Prostate gland (tissue), 2 donors: ENCODE measurements at regions of chr6 and their contacts with region 1.

Region 1: GRCh38 chr6:31901953-31902643 is at the start of gene ZBTB12:
- DNase-seq: peak; percentile 92
- H3K4me3 ChIP-seq: peak within 1 kb of the TSS; percentile 59 to 68
- H3K27ac ChIP-seq: peak within 1 kb of the TSS; percentile 82 to 90
- H3K4me1 ChIP-seq: peaks cover 5% of the 10 kb centered on the region
- H3K27me3 ChIP-seq: no peaks in the 10 kb centered on the region
- CTCF ChIP-seq: peak in 2 of 4 experiments; percentile 17 to 21
- POLR2A ChIP-seq: peak; percentile 57
- total RNA-seq, gene ZBTB12: 3.8 to 4.1 TPM

Region 2: GRCh38 chr6:31559958-31560696 is 342.0 kb before region 1 on chr6:
- intact Hi-C with region 1: no loop called
- DNase-seq: no peak
- H3K4me3 ChIP-seq: no peak overlapping the region
- H3K27ac ChIP-seq: no peak overlapping the region
- H3K4me1 ChIP-seq: no peaks in the 10 kb centered on the region
- H3K27me3 ChIP-seq: no peaks in the 10 kb centered on the region
- CTCF ChIP-seq: no peak
- POLR2A ChIP-seq: no peak

Region 3: DNA sequence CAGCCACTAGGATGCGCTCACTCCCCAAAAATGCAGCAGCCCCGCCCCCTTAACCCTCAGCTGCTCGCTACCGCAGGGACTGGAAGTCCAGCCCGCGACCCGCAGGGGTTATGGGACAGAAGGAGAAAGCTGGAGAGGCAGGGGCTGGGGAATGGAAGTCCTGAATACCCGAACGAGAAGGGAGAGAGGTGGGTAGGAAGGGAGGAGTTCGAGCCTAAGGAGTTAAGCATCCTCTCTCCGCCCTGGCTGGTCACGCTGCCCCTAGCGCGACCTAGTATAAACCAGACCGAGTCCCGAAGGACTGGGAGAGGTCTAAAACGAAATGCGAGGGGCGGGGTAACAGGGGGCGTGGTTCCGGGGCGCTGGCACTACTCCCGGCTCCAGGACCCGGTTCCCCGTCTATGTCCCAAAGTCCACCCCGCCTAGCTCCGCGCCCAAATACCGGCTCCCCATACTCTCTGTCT is 172.6 kb before region 1 on chr6:
- intact Hi-C with region 1: loop called (anchors 5 kb)
- DNase-seq: peak; percentile 88
- H3K4me3 ChIP-seq: peak overlapping the region; percentile 83 to 88
- H3K27ac ChIP-seq: peak overlapping the region; percentile 98 to 99
- H3K4me1 ChIP-seq: peaks cover 10% of the 10 kb centered on the region
- H3K27me3 ChIP-seq: no peaks in the 10 kb centered on the region
- CTCF ChIP-seq: peak in 3 of 4 experiments; percentile 68 to 82 (median 77)
- POLR2A ChIP-seq: peak; percentile 70

Region 4: DNA sequence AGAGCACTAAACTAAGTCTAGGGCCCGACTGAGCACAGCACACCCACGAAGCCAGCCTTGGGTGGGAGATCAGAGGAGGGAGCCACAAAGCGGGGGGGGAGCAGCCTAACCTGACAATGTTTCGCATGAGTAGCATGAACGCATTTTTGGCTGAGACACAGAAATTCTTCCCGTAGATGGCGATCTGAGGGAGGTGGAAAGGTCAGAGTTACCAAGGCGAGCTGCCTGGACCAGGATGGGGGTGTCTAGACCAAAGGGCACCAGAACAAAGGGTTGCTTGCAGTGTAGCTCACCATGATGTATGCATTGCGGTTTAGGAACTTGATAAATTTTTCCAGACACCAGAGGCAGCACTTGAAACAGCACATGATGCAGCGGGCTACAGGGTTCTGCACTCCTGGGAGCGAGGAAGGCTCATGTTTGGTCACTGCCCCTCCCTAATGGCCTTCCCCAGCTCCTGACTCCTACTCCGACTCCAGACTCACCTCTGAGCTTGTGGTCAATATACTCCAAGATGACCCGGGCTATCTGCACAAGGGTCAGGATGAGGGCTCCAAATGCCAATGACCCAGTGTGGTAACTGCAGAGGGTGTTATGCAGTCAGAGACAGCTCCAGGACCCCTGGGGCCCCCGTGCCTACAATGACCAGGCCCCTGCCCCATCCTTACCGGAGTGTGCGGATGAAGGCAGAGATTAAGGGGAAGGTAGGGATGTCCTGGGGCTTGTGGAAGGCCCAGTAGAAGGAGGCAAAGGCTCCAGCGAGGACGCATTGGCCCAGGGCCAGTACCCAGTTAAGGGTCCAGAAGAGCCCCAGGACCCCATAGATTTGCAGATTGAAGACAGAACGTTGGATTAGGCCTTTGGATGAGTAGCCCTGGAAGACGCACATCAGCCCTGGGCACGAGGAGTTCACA is 36.6 kb before region 1 on chr6:
- intact Hi-C with region 1: loop called (anchors 2 kb)
- DNase-seq: no peak
- H3K4me3 ChIP-seq: no peak overlapping the region
- H3K27ac ChIP-seq: peak overlapping the region; percentile 91 to 97
- H3K4me1 ChIP-seq: peaks cover 13% of the 10 kb centered on the region
- H3K27me3 ChIP-seq: no peaks in the 10 kb centered on the region
- CTCF ChIP-seq: no peak
- POLR2A ChIP-seq: no peak

Region 5: GRCh38 chr6:31950890-31951289 is 48.8 kb after region 1 on chr6:
- intact Hi-C with region 1: loop called (anchors 2 kb)
- DNase-seq: no peak
- H3K4me3 ChIP-seq: no peak overlapping the region
- H3K27ac ChIP-seq: no peak overlapping the region
- H3K4me1 ChIP-seq: peaks cover 2% of the 10 kb centered on the region
- H3K27me3 ChIP-seq: no peaks in the 10 kb centered on the region
- CTCF ChIP-seq: no peak
- POLR2A ChIP-seq: no peak

Region 6: DNA sequence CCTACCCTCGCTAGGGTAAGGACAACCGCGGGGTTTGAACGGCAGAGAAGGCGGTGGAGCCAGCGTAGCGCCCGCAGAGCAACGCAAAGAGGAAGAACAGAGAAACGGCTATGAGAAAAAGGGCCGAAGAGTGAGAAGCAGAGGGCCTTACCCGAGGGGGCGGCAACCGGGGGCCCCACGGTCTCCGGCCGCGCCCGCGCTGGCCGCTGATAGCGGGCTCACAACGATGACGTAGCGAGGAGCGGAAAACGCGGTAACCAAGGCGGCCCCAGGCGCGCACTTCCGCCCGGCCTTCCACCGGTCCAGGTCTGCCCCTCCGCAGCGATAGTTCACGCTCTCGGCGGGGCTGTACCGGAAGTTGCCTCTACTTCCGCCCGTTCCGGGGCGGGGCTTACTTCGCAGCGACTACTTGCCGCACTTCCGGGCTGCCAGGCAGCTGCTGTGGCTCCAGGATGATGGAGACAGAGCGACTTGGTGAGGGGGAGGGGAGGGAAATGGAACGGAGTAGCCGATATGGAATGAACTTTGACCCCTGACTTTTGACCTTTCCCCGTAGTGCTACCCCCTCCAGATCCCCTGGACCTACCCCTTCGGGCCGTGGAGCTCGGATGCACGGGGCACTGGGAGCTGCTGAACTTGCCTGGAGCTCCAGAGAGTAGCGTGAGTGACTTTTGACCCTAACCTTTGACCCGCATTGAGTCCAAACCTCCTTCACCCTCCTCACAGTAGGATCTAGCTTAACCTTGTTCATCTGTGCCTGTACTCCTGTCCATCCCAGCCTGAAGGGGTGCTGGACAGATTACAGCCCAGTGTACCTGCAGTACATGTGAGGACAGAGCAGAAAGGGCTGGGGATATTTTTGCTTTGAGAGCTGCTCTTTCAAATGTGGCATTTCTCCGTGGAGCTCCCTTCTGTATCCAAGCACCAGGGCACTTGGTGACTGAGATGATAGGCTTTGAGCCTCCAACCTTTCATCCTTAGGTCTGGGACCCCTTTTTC is 56.9 kb after region 1 on chr6 and contains the starts of genes NELFE and SKIC2:
- intact Hi-C with region 1: loop called (anchors 2 kb)
- DNase-seq: peak; percentile 98
- H3K4me3 ChIP-seq: peak within 1 kb of the TSS; percentile 59 to 65
- H3K27ac ChIP-seq: peak within 1 kb of the TSS; percentile 63 to 73
- H3K4me1 ChIP-seq: no peaks in the 10 kb centered on the region
- H3K27me3 ChIP-seq: no peaks in the 10 kb centered on the region
- CTCF ChIP-seq: no peak
- POLR2A ChIP-seq: peak; percentile 60
- total RNA-seq, gene NELFE: 88.9 to 94.0 TPM
- total RNA-seq, gene SKIC2: 34.8 to 66.2 TPM

Region 7: DNA sequence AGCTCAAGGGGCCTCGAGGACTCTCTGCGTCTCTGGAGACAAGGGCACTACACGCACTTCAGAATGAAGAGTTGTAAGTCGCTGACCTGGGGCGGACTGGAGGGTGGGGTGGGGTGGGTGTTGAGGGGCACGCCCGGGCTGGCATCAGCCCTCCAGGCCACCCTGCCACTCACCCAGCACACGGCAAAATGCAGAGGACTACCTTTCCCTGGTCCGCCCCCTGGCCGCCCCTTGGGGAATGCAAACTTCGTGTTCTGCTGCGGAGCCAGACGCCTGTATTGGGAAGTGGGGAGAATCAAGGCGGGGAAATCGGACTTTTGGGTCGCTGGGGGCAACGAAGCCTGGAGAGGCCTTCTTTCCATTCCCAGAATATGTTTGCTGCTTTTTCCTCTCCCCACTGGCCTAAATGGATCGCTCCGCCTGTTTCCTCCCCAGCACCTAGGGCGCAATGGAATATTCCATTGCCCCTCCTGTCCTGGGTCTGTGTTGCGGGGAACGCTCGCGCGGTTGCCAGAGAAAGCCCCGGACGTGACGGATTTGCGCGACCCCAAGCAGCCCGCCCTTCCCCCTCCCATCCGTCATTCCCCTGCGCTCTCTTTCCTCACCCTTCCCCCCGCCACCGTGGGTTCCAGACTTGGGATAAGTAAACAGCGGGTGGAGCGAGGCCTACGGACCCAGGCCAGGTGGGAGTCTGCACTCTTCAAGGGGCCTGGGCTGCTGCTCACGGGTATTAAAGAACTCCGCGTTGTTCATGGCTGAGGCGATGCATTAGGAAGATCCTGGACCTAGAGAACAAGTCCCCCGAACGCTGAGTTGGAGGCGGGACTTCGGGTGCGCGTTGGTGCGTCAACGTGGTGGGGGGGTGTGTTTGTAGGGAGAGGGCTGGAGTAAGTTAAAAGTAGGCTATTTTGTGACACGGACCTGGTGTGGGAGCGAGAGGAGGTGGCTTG is 251.7 kb after region 1 on chr6 and contains the start of gene PPT2:
- intact Hi-C with region 1: loop called (anchors 10 kb)
- DNase-seq: peak; percentile 80
- H3K4me3 ChIP-seq: peak within 1 kb of the TSS; percentile 53 to 61
- H3K27ac ChIP-seq: peak within 1 kb of the TSS; percentile 88 to 89
- H3K4me1 ChIP-seq: peaks cover 14% of the 10 kb centered on the region
- H3K27me3 ChIP-seq: no peaks in the 10 kb centered on the region
- CTCF ChIP-seq: peak in 3 of 4 experiments; percentile 10 to 38 (median 28)
- POLR2A ChIP-seq: peak; percentile 39
- total RNA-seq, gene PPT2: 18.6 to 32.9 TPM

Region 8: GRCh38 chr6:32177788-32178546 is 275.9 kb after region 1 on chr6 and contains the start of gene RNF5:
- intact Hi-C with region 1: loop called (anchors 5 kb)
- DNase-seq: peak; percentile 99
- H3K4me3 ChIP-seq: peak within 1 kb of the TSS; percentile 50 to 59
- H3K27ac ChIP-seq: peak within 1 kb of the TSS; percentile 93
- H3K4me1 ChIP-seq: no peaks in the 10 kb centered on the region
- H3K27me3 ChIP-seq: no peaks in the 10 kb centered on the region
- CTCF ChIP-seq: no peak
- POLR2A ChIP-seq: no peak
- total RNA-seq, gene RNF5: 98.6 to 129 TPM